Caco-2 (cell line): ENCODE measurements at regions of chr15 and their contacts with region 1.

Region 1: GRCh38 chr15:45048794-45049631 is 26.0 kb downstream of the SORD start:
- DNase-seq: peak; percentile 65 to 68
- H3K4me3 ChIP-seq: no peak overlapping the region
- H3K4me3 Mint-ChIP-seq: peak overlapping the region; percentile 56
- H3K27ac Mint-ChIP-seq: peak overlapping the region; percentile 87
- H3K4me1 ChIP-seq: peaks cover 26% of the 10 kb centered on the region
- H3K4me1 Mint-ChIP-seq: peaks cover 12% of the 10 kb centered on the region
- H3K27me3 ChIP-seq: no peaks in the 10 kb centered on the region
- H3K27me3 Mint-ChIP-seq: no peaks in the 10 kb centered on the region
- CTCF ChIP-seq: no peak

Region 2: GRCh38 chr15:45064386-45064785 is 15.4 kb after region 1 on chr15:
- CTCF ChIA-PET with region 1: no interaction called
- POLR2A ChIA-PET with region 1: no interaction called
- intact Hi-C with region 1: loop called (anchors 1 kb)
- DNase-seq: peak; percentile 88
- H3K4me3 ChIP-seq: no peak overlapping the region
- H3K4me3 Mint-ChIP-seq: no peak overlapping the region
- H3K27ac Mint-ChIP-seq: peak overlapping the region; percentile 49
- H3K4me1 ChIP-seq: peaks cover 5% of the 10 kb centered on the region; the same call in 1 of the 2 replicates
- H3K4me1 Mint-ChIP-seq: peaks cover 14% of the 10 kb centered on the region
- H3K27me3 ChIP-seq: no peaks in the 10 kb centered on the region
- H3K27me3 Mint-ChIP-seq: no peaks in the 10 kb centered on the region
- CTCF ChIP-seq: no peak

Region 3: GRCh38 chr15:45091161-45091560 is 42.1 kb after region 1 on chr15:
- CTCF ChIA-PET with region 1: no interaction called
- POLR2A ChIA-PET with region 1: no interaction called
- intact Hi-C with region 1: no loop called
- DNase-seq: peak in 1 of 2 experiments; percentile 45
- H3K4me3 ChIP-seq: no peak overlapping the region
- H3K4me3 Mint-ChIP-seq: peak overlapping the region; percentile 14
- H3K27ac Mint-ChIP-seq: peak overlapping the region; percentile 59
- H3K4me1 ChIP-seq: peaks cover 41% of the 10 kb centered on the region
- H3K4me1 Mint-ChIP-seq: peaks cover 21% of the 10 kb centered on the region
- H3K27me3 ChIP-seq: no peaks in the 10 kb centered on the region
- H3K27me3 Mint-ChIP-seq: no peaks in the 10 kb centered on the region
- CTCF ChIP-seq: no peak